ENCODE measurements at regions of chr2 and their contacts with region 1.

Region 1: DNA sequence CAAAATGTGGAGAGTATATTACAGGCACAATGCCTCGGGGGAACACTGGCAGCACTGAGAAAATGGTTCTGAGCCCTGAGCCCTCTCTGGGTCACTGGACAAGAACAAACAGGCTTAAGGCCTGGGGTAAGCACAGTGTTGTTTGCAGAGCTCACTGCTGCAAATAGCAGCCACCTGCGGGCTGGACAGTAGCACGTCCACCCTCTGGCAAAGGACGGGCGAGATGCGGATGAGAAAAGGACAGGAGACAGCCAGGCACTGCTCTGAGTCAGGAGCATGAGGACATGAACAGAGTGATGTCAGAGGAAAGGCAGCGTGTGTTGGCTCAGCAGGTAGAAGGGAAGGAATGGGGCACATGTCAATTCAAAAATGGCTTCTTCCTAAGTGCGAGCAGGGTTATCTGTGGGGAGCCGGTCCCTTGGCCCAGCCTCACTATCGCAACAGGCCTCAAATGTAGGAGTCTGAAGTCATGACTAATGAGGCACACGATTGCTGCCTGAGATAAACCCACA is 25.9 kb upstream of the NEB start:
- DNase-seq: peak; percentile 73 to 92
- ATAC-seq: peak; percentile 96 to 99 (median 98)
- H3K4me3 ChIP-seq: no peak overlapping the region
- H3K27ac ChIP-seq: peak overlapping the region; percentile 93
- H3K4me1 ChIP-seq: peaks cover 35% of the 10 kb centered on the region
- H3K27me3 ChIP-seq: no peaks in the 10 kb centered on the region
- CTCF ChIP-seq: no peak

Region 2: GRCh38 chr2:151638191-151638933 is 121.8 kb before region 1 on chr2:
- intact Hi-C with region 1: no loop called
- DNase-seq: no peak
- ATAC-seq: peak; percentile 53 to 69 (median 65)
- H3K4me3 ChIP-seq: no peak overlapping the region
- H3K27ac ChIP-seq: peak overlapping the region; percentile 74
- H3K4me1 ChIP-seq: peaks cover 24% of the 10 kb centered on the region
- H3K27me3 ChIP-seq: no peaks in the 10 kb centered on the region
- CTCF ChIP-seq: no peak

Region 3: GRCh38 chr2:151728804-151729414 is 31.3 kb before region 1 on chr2:
- intact Hi-C with region 1: loop called in 1 of 2 experiments (anchors 5 kb)
- DNase-seq: no peak
- ATAC-seq: peak in 3 of 4 donors; percentile 33 to 43 (median 35)
- H3K4me3 ChIP-seq: peak overlapping the region; percentile 75
- H3K27ac ChIP-seq: peak overlapping the region; percentile 93
- H3K4me1 ChIP-seq: peaks cover 36% of the 10 kb centered on the region
- H3K27me3 ChIP-seq: no peaks in the 10 kb centered on the region
- CTCF ChIP-seq: peak; percentile 40

Region 4: GRCh38 chr2:152961351-152961750 is 1201.2 kb after region 1 on chr2:
- intact Hi-C with region 1: no loop called
- DNase-seq: no peak
- ATAC-seq: no peak
- H3K4me3 ChIP-seq: no peak overlapping the region
- H3K27ac ChIP-seq: no peak overlapping the region
- H3K4me1 ChIP-seq: no peaks in the 10 kb centered on the region
- H3K27me3 ChIP-seq: no peaks in the 10 kb centered on the region
- CTCF ChIP-seq: no peak

Measured in psoas muscle (tissue), 8 donors.